ENCODE measurements at regions of chr1 and their contacts with region 1.

Region 1: DNA sequence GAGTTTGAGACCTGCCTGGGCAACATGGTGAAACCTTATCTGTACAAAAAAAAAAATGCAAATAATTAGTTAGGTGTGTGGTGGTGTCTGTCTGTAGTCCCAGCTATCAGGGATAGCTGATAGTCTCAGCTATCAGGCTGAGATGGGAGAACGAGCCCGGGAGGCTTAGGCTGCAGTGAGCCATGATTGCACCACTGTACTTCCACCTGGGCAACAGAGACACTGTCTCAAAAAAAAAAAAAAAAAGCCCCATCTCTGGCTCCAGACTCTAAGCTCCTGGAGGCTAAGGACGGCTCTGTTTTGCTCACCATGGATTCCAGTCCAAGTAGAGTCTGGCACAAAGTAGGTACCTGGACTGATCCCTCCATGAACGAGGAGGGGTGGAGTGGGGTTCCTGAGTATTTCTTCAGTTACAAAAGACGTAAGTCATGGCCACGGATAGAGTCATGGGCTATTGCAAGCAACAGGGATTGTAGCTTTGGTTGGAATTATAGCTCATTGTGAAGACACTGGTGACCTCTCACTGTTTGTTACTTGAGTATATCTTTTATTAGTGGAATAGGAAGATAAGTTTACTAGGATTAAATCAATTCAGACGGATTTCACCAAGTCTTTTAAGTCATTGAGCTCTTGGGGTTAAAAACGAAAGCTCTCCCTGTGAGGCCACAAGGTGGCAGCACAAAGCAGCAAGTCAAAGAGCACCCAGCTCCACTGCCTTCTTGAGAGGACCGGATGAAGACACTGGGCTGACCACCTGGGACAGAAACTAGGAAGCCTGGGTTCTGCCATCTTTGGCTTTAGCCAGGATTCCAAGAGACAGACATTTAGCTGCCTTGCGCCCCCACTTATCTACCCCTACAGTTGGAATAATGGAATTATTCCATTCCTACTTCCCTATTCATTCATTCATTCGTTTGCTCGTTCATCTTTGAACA is 35.6 kb upstream of the TMEM61 start:
- DNase-seq: peak; percentile 34 to 74 (median 46)
- H3K4me3 ChIP-seq: no peak overlapping the region
- H3K27ac ChIP-seq: no peak overlapping the region
- H3K4me1 ChIP-seq: no peaks in the 10 kb centered on the region
- H3K27me3 ChIP-seq: no peaks in the 10 kb centered on the region
- CTCF ChIP-seq: peak in 2 of 3 donors; percentile 24 to 35
- EP300 ChIP-seq: no peak
- POLR2A ChIP-seq: no peak

Region 2: DNA sequence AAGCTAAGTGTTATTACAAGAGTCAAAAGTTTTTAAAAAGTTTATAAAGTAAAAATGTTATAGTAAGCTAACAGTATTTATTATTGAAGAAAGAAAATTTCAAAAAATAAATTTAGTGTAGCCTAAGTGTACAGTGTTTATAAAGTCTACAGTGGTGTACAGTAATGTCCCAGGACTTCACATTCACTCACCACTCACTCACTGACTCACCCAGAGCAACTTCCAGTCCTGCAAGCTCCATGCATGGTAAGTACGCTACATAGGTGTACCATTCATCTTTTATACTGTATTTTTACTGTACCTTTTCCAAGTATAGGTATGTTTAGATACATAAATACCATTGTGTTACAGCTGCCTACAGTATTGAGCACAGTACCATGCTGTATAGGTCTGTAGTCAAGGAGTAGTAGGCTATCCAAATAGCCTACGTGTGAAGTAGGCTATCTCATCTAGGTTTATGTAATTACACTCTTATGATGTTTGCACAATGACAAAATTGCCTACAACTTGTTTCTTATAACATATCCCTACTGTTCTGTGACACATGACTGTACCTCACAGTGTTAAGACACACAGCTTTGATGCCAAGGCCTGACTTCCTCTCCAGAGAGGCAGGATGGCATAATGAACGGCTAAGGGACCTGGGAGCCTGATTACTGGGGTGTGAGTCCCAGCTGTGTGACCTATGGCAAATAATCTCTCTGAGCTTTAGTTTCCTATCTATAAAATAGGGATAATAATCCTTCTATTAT is 70.6 kb before region 1 on chr1:
- intact Hi-C with region 1: loop called in 1 of 4 experiments (anchors 2 kb)
- DNase-seq: no peak
- H3K4me3 ChIP-seq: no peak overlapping the region
- H3K27ac ChIP-seq: no peak overlapping the region
- H3K4me1 ChIP-seq: no peaks in the 10 kb centered on the region
- H3K27me3 ChIP-seq: no peaks in the 10 kb centered on the region
- CTCF ChIP-seq: no peak
- EP300 ChIP-seq: no peak
- POLR2A ChIP-seq: no peak

Region 3: DNA sequence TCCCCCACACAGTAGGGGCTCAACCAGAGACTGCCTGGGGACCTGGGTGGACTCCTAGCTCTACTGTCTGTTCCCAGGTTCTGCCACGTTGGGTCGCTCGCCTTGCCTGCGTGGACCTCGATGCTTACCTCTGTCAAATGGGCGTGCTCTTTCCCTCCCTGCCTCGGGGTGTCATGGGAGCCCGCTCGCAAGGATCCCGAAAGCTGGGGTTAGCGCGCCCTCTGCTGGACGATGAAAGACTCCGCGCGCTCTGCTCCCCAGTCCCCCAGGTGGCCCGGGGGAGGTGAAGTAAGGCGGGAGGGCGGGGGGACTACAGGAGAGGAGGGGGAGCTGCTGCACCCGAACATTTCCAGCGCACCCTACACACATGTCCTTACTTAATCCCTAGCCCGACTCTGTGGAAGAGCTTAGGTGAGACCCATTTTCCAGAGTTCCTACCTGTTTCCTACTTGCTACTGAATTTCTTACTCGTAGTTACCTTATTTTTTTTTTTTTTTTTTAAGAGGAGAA is 51.5 kb after region 1 on chr1:
- intact Hi-C with region 1: loop called in 2 of 4 experiments (anchors 5 to 10 kb)
- DNase-seq: peak; percentile 31 to 78 (median 46)
- H3K4me3 ChIP-seq: no peak overlapping the region
- H3K27ac ChIP-seq: no peak overlapping the region
- H3K4me1 ChIP-seq: no peaks in the 10 kb centered on the region
- H3K27me3 ChIP-seq: no peaks in the 10 kb centered on the region
- CTCF ChIP-seq: peak in 1 of 3 donors; percentile 33
- EP300 ChIP-seq: no peak
- POLR2A ChIP-seq: no peak

Measured in ovary (tissue), 10 donors.